ENCODE measurements at regions of chr2 and their contacts with region 1.

Region 1: GRCh38 chr2:118088051-118089024 is at the start of gene INSIG2:
- DNase-seq: peak; percentile 76 to 97 (median 93)
- H3K4me3 ChIP-seq: peak within 1 kb of the TSS; percentile 49 to 96 (median 85)
- H3K27ac ChIP-seq: peak within 1 kb of the TSS in 40 of 59 donors; percentile 2 to 83 (median 52)
- H3K27me3 ChIP-seq: no peaks in the 10 kb centered on the region
- CTCF ChIP-seq: peak in 19 of 56 donors; percentile 5 to 49 (median 18)
- total RNA-seq, gene INSIG2: 17.4 to 39.6 (median 27.9) TPM

Region 2: GRCh38 chr2:118186110-118186857 is 97.9 kb after region 1 on chr2:
- intact Hi-C with region 1: loop called in 1 of 2 experiments (anchors 5 kb)
- DNase-seq: peak; percentile 54 to 91 (median 87)
- H3K4me3 ChIP-seq: peak overlapping the region; percentile 45 to 84 (median 72)
- H3K27ac ChIP-seq: peak overlapping the region in 54 of 59 donors; percentile 22 to 84 (median 68)
- H3K27me3 ChIP-seq: no peaks in the 10 kb centered on the region
- CTCF ChIP-seq: peak in 40 of 56 donors; percentile 9 to 62 (median 38)

Measured in dorsolateral prefrontal cortex (tissue), 120 donors.